ENCODE measurements at regions of chr13 and their contacts with region 1.

Region 1: GRCh38 chr13:27374650-27375049 is 49.8 kb upstream of the GTF3A start:
- DNase-seq: peak; percentile 72
- H3K4me3 ChIP-seq: no peak overlapping the region
- H3K27ac ChIP-seq: no peak overlapping the region
- H3K4me1 ChIP-seq: no peaks in the 10 kb centered on the region
- H3K27me3 ChIP-seq: peaks cover 2% of the 10 kb centered on the region
- CTCF ChIP-seq: peak; percentile 62 to 83

Region 2: GRCh38 chr13:27424246-27425157 is 49.9 kb after region 1 on chr13 and contains the start of gene GTF3A:
- CTCF ChIA-PET with region 1: no interaction called
- dilution Hi-C with region 1: no loop called
- in situ Hi-C with region 1: no loop called
- intact Hi-C with region 1: loop called (anchors 2 kb)
- DNase-seq: peak; percentile 83
- H3K4me3 ChIP-seq: peak within 1 kb of the TSS; percentile 58 to 68 (median 62)
- H3K27ac ChIP-seq: peak within 1 kb of the TSS; percentile 64
- H3K4me1 ChIP-seq: peaks cover 33% of the 10 kb centered on the region
- H3K27me3 ChIP-seq: no peaks in the 10 kb centered on the region
- CTCF ChIP-seq: no peak
- total RNA-seq, gene GTF3A: 62.0 to 69.3 TPM

Region 3: DNA sequence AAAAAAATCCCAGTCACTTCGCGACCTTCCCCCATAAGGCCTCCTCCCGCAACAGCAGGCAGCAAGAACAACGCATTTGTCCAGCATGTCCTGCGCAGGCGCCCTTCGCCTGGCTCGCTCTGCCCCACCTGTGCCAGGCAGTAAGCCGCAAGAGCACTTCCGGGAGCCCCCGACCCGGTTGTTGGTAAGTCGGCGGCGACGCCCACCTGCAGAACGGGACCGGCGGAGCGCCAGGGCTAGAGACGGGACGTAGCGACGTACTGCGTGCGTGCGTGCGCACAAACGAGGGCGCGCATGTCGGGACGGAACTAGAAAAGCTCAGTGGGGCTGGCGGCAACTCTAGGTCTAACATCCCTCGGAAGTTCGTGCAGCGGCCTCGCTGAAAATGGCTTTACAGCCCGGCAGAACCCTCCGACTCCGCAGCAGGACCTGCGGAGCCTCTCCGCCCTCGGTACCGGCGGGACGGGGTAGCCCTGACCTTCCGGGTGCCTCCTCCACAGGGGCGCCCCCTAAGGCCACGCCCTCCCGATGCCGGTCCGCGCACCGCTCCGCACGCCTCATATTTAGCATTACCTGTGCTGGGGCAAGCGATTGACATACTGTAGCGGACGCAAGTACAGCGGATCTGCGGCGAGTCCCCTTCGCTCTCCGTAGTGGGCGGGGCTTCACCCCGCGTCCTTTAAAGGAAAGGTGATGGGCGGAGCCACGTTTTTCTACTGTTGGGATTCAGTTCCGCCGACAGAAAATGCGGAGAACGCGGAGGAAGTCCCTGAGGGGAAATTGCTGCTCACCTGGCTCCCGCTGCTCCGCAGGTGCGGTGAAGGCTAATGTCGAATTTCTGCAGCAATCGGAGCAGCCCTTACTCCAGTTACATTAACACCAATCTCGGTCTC is 75.5 kb after region 1 on chr13 and contains the start of gene MTIF3:
- CTCF ChIA-PET with region 1: no interaction called
- dilution Hi-C with region 1: no loop called
- in situ Hi-C with region 1: no loop called
- intact Hi-C with region 1: loop called (anchors 1 kb)
- DNase-seq: peak; percentile 94
- H3K4me3 ChIP-seq: peak within 1 kb of the TSS; percentile 58 to 97 (median 87)
- H3K27ac ChIP-seq: peak within 1 kb of the TSS; percentile 76
- H3K4me1 ChIP-seq: peaks cover 9% of the 10 kb centered on the region
- H3K27me3 ChIP-seq: no peaks in the 10 kb centered on the region
- CTCF ChIP-seq: peak; percentile 8 to 14
- total RNA-seq, gene MTIF3: 32.2 to 35.5 TPM

Region 4: GRCh38 chr13:27533155-27533643 is 158.5 kb after region 1 on chr13:
- CTCF ChIA-PET with region 1: no interaction called
- dilution Hi-C with region 1: no loop called
- in situ Hi-C with region 1: no loop called
- intact Hi-C with region 1: loop called (anchors 2 kb)
- DNase-seq: peak; percentile 62
- H3K4me3 ChIP-seq: no peak overlapping the region
- H3K27ac ChIP-seq: no peak overlapping the region
- H3K4me1 ChIP-seq: peaks cover 4% of the 10 kb centered on the region
- H3K27me3 ChIP-seq: no peaks in the 10 kb centered on the region
- CTCF ChIP-seq: peak; percentile 78 to 97

Region 5: DNA sequence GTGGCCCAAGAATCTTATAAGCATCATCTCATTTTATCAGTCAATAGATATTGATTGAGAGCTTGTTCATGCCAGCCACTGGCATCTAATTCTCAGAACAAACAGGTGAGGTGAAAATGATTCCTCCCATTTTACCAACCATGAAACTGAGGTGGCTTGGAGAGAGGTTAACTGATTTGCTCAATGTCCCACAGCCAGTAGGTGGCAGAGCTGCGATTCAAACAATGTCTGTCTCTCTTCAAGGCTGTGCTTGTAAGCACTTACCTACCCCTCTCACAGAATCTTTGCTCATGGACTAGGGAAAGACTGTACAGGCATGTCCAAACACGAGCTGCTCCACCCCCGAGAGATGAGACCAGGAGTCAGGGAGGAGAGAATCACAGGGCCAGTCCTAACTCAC is 396.2 kb after region 1 on chr13:
- CTCF ChIA-PET with region 1: no interaction called
- dilution Hi-C with region 1: no loop called
- in situ Hi-C with region 1: no loop called
- intact Hi-C with region 1: loop called (anchors 1 kb)
- DNase-seq: peak; percentile 86
- H3K4me3 ChIP-seq: no peak overlapping the region
- H3K27ac ChIP-seq: no peak overlapping the region
- H3K4me1 ChIP-seq: no peaks in the 10 kb centered on the region
- H3K27me3 ChIP-seq: no peaks in the 10 kb centered on the region
- CTCF ChIP-seq: peak; percentile 70 to 78

Region 6: GRCh38 chr13:27980280-27980998 is 605.8 kb after region 1 on chr13:
- CTCF ChIA-PET with region 1: no interaction called
- dilution Hi-C with region 1: no loop called
- in situ Hi-C with region 1: loop called (anchors 10 kb)
- intact Hi-C with region 1: no loop called
- DNase-seq: no peak
- H3K4me3 ChIP-seq: no peak overlapping the region
- H3K27ac ChIP-seq: no peak overlapping the region
- H3K4me1 ChIP-seq: no peaks in the 10 kb centered on the region
- H3K27me3 ChIP-seq: peaks cover 62% of the 10 kb centered on the region
- CTCF ChIP-seq: no peak

Region 7: DNA sequence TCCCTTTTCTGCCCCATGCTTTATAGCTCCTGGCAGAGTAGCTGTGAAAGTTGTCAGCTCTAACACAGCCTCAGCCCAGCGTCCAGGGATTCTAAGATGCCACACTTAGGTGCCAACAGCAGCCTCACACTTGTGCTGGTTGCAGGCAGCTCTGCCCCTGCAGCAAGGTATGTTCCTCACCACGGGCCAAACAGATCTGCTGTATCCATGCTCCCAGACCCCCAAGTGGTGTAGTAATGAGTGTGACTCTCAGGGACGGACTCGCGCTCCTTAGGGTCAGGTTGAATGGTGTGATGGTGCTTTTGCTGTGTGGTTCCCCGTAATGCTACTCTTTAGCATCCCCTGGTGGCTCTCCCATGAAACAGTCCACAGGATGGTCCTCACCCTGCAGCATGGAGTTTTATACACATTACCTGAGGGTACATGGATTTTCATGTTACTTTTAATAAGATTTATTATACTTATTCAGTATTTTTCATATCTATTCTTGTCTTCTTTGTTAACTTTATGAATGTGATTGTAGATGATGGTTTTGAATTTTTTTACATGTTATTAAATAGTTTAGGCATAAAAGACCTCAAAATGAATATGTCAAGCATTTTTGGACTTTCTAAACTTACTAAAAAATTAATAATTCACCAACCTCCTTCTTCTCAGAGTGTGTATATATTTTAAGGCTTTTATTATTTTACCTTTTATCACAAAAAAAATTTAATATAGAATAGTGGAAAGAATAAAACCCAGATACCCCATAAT is 1988.4 kb after region 1 on chr13:
- CTCF ChIA-PET with region 1: no interaction called
- dilution Hi-C with region 1: no loop called
- in situ Hi-C with region 1: no loop called
- intact Hi-C with region 1: loop called (anchors 10 kb)
- DNase-seq: peak; percentile 32
- H3K4me3 ChIP-seq: no peak overlapping the region
- H3K27ac ChIP-seq: no peak overlapping the region
- H3K4me1 ChIP-seq: no peaks in the 10 kb centered on the region
- H3K27me3 ChIP-seq: no peaks in the 10 kb centered on the region
- CTCF ChIP-seq: peak; percentile 97 to 99

Measured in mammary epithelial cell (primary cell).